ENCODE measurements at regions of chr15 and their contacts with region 1.

Region 1: DNA sequence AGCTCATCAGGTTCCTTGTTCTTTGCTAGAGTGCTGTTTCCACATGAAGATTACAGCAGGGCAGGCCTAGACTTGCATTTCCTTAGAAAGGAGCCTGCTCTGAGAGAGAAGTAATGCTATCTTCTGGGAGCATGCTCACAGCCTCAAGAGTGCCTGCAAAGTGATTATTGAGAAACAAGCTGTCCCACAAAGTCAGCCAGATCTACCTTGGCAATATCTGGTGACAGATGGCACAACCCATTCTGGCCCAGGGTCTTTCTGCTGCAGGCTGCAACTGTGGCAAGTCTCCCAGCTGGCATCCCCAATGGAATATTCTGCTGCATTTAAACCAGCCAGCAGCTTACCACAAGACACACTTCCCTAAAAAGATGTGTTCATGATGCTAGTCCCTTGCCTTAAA is 29.3 kb downstream of the MTMR10 start:
- DNase-seq: no peak
- H3K4me3 ChIP-seq: no peak overlapping the region
- H3K27ac ChIP-seq: no peak overlapping the region
- H3K4me1 ChIP-seq: peaks cover 11% of the 10 kb centered on the region
- CTCF ChIP-seq: no peak

Region 2: DNA sequence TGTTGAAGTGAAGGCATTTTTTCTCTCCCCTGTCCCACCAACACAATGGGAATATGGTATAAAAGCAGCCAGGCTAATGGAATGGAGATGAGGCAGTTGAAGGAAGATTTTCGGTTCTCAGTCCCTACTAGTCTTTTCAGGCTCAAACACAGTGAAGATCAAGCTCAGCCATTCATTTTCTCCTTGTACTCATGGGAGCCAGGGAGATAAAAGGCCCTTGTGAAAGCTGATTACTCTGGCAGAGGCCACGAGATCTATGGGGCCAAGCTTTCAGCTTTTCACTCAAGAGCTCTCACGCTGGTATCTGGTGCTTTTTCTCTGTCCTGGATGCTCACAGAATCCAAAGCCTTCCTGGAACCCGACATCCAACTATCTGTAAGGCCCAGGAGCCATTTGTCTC is 72.9 kb before region 1 on chr15:
- CTCF ChIA-PET with region 1: no interaction called
- POLR2A ChIA-PET with region 1: no interaction called
- intact Hi-C with region 1: no loop called
- DNase-seq: no peak
- H3K4me3 ChIP-seq: no peak overlapping the region
- H3K27ac ChIP-seq: no peak overlapping the region
- H3K4me1 ChIP-seq: no peaks in the 10 kb centered on the region
- CTCF ChIP-seq: no peak

Region 3: GRCh38 chr15:30903497-30904201 is 58.4 kb before region 1 on chr15 and contains the start of gene FAN1:
- CTCF ChIA-PET with region 1: no interaction called
- POLR2A ChIA-PET with region 1: interaction called, 3 read pairs
- intact Hi-C with region 1: loop called (anchors 10 kb)
- DNase-seq: peak; percentile 88
- H3K4me3 ChIP-seq: peak within 1 kb of the TSS; percentile 74
- H3K27ac ChIP-seq: peak within 1 kb of the TSS; percentile 13
- H3K4me1 ChIP-seq: peaks cover 14% of the 10 kb centered on the region
- CTCF ChIP-seq: 0 out of 2 replicates have a peak, but pooled peaks have one; percentile 16
- total RNA-seq, gene FAN1: 15.4 and 16.4 TPM in 2 replicates

Region 4: DNA sequence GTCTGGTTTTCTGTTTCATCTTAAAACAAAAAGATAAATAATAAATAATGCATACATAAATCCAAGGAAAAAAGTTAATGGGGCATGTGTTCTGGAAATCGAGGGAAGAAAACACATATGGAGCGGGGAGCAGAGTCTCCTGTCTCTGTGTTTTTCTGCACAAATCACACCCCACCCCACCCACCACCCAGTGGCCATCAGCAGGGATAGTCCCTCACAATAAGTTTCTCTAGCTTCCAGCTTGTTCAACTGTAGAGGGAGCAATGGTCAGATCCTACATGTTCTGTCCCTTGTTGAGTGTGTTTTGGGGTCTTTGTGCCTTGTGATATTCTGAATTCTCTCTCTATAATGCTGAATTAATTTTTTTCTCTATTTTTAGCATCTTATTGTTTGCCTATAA is 1041.5 kb after region 1 on chr15:
- CTCF ChIA-PET with region 1: no interaction called
- POLR2A ChIA-PET with region 1: no interaction called
- intact Hi-C with region 1: no loop called
- DNase-seq: no peak
- H3K4me3 ChIP-seq: no peak overlapping the region
- H3K27ac ChIP-seq: no peak overlapping the region
- H3K4me1 ChIP-seq: no peaks in the 10 kb centered on the region
- CTCF ChIP-seq: no peak